RWPE1 (cell line): ENCODE measurements at regions of chr19 and their contacts with region 1.

Region 1: DNA sequence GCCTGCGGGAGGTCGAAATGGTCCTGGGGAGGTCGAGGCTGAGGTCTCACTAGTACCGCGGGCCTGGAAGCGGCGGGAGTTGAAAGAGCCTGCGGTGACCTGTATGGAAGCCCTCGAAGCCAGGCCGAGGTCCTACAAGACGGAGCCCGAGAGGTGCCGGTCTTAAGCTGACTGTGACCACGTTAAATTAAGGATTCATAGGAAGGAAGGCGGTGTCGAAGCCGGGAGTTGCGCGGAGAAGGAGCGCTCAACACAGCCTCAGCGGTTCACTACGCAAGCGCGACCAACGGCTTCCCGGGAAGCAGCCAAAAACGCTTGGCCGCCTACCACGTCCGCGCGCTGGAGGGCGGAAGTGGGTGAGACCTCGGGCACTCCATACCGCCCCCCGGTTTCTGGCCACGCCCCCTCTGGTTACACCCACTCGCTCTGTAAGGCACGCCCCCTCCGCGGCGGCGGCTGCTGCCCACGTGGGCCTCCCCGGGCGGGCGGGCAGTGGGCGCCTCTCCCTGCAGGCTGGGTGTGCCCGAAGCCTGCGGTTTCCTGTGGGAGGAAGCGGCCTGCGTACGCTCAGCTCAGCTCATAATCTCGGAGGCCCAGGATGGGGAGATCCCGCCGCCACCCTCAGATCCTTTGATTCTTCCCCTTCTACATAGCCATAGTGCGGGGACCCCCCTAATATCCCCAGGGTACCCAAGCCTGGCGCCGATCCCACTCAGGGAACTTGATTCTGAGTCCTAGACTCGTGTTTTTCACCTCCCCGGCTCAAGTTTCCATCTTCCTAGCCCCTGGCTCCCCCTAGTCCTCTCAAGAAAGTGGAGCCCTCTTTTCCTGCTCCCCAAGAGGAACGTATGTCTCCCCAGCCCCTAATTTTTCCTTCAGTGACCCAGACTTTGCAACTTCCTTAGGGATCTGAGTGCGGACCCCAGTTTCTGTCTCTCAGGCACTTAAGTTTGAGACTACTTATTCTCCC is 3.4 kb upstream of the EMP3 start:
- DNase-seq: peak; percentile 97
- H3K27ac ChIP-seq: peak overlapping the region; percentile 99
- CTCF ChIP-seq: no peak

Region 2: DNA sequence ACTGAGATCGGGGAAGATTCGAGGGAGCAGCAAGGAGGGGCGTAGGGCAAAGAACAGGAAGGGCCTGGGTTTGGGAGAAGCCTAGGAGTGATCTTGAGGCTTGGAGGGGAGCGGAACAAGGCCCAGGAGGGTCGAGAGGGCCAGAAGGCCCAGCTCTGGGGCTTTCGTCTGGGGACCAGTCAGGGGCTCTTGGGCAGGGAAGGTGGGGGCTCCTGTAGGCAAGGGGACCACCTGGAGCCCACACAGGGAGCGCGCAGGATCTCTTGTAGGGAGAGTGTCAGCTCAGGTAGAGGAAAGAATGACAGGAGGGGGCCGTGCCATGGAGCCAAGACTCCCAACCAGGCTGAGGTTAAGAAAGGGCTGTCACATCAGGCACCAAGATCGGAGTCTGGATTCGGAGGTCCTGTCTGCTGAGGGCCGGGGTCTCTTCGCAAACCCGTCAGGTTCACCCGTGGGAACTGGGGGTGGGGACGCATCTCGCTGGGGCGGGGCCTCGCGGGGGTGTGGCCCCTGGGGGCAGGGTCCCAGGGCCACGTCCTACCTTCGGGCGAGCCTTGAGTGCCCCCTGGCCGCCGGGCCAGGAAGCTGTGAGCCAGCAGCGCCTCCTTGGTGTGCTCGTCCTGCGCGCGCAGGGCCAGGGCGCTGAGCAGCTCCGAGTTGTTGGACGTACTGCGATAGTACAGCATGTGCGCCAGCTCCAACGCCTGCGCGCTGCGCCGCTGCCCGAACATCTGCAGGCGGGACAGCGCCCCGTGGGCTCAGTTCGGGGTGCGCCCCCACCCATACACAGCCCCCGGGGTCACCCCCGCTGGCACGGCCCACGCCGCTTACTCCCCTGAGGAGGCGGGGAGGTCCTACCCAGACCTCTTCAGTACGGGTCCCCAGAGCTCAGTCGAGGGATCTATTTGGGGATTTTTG is 11.8 kb after region 1 on chr19:
- CTCF ChIA-PET with region 1: interaction called, 17 read pairs
- POLR2A ChIA-PET with region 1: interaction called, 3 read pairs
- DNase-seq: peak; percentile 74
- H3K27ac ChIP-seq: peak overlapping the region; percentile 97
- CTCF ChIP-seq: peak; percentile 75

Region 3: DNA sequence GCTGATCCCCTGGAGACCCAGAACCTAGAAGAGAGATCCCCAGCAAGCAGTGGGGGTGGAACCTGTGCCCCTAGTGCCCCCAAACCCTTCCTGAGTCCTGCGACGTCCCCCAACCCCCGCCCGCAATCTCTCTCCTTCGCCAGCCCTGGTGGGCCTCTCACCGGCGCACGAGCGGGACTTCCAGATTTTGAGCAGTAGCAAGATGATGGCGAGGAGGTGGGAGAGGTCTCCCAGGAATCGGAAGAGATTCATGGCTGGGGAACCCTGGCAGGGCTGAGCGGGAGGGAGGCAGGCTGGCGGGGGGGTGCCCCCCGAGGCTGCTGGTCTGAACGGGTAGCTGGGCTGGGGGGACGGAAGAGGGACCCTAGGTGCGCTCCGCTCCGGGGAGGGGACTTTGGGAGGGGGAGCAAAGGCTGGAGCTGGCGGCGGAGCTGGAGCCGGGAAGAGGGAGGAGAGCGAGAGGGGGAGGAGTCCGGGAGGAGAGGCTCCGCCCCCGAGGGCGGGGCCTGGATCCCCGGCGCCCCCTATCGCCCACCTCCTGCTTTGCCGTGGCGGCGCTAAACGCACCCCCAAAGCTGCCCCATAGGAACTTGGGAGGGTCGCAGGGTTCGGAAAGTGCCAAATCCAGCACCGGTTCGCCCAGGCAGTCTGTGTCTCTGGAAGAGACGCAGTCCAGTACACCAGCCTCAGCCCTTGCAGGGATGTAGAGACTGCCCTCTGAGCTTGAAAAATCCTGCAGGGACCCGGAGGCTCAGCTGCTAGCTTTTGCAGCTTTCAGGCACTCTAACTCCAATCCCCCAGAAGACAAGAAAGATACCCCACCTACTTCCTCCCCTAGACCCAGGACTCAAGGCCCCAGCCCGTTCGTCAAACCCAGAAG is 69.4 kb after region 1 on chr19 and contains the start of gene KDELR1:
- CTCF ChIA-PET with region 1: interaction called, 3 read pairs
- POLR2A ChIA-PET with region 1: interaction called, 13 read pairs
- DNase-seq: peak; percentile 81
- H3K27ac ChIP-seq: peak within 1 kb of the TSS; percentile 84
- CTCF ChIP-seq: peak; percentile 92